GM10248 (cell line): ENCODE measurements at regions of chr10 and their contacts with region 1.

Region 1: DNA sequence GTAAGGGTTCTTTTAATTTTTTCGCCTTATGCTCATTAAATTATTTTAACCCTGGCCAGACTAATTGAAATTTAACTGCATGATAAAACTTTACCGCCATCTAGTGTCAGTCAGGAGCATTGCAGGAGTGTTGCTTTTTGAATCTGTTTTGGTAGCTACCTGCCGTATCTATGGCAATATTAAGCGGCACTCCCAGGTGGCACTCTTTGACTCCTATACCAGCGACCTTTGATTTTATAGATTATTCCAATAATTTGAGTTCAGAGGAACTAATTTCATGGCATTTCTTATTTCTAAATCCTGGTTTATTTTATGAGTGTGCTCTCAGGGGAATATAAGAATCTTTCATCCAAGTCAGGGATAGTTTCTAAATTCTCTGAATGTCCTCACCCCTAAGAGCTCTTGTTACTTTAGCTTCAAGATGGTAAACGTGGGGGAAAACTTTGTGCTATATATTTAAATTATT is 198.9 kb downstream of the REEP3 start:
- DNase-seq: peak; percentile 41
- CTCF ChIP-seq: peak; percentile 85

Region 2: DNA sequence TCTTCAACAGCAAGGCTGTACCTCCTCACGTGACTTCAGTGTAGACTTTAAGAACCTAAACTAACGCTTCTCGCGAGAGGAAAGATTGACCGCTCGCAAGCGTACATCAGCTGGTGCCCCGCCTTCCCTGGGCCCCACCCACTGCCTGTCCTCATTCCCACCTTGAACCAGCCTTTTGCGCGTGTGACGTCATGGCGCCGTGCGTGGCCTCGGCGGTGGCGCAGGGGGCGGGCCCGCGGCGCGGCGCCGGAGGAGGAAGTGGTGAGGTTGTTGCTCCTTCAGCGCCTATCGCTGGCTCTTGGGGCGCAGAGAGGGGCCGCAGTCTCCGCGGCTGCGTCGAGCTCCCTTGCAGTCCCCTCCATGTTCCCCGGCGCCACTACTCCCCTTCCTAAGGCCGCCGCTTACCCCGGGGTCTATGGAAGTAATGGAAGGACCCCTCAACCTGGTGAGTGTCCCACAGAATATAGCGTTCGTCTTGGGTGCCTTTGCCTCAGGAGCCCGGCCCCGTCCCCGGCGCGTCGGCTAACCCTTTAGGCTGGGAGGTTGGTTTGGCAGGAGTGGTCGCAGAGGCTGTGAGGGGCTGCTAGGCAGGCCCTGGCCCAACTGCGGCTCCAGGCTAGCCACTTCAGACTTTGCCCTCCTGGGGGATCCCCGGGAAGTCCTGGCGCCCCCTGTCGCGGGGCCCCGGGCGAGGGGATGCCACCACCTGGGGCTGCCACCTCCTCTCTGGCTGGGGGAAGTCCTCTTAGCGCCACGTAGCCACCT is 586.9 kb before region 1 on chr10 and contains the start of gene NRBF2:
- CTCF ChIA-PET with region 1: interaction called, 24 read pairs
- POLR2A ChIA-PET with region 1: no interaction called
- DNase-seq: peak; percentile 94
- CTCF ChIP-seq: no peak

Region 3: DNA sequence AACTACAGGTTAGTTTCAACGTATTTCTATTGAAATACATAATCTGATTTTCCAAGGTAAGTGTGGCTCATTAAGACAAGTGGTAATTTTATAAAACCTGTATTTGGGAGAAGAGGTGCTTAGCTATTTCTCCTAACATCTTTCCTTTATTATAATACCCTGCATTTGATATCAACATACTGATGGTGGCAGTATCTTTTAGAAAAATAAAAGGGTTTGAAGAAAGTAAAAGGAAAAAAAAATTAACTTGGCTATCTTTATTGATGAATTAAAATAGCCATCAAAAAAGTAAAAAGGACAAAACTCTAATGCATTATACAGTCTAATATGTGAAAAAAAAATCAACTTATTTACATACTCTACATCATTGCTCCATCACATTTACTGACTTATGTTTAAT is 519.0 kb before region 1 on chr10:
- CTCF ChIA-PET with region 1: interaction called, 11 read pairs
- POLR2A ChIA-PET with region 1: no interaction called
- DNase-seq: no peak
- CTCF ChIP-seq: no peak

Region 4: DNA sequence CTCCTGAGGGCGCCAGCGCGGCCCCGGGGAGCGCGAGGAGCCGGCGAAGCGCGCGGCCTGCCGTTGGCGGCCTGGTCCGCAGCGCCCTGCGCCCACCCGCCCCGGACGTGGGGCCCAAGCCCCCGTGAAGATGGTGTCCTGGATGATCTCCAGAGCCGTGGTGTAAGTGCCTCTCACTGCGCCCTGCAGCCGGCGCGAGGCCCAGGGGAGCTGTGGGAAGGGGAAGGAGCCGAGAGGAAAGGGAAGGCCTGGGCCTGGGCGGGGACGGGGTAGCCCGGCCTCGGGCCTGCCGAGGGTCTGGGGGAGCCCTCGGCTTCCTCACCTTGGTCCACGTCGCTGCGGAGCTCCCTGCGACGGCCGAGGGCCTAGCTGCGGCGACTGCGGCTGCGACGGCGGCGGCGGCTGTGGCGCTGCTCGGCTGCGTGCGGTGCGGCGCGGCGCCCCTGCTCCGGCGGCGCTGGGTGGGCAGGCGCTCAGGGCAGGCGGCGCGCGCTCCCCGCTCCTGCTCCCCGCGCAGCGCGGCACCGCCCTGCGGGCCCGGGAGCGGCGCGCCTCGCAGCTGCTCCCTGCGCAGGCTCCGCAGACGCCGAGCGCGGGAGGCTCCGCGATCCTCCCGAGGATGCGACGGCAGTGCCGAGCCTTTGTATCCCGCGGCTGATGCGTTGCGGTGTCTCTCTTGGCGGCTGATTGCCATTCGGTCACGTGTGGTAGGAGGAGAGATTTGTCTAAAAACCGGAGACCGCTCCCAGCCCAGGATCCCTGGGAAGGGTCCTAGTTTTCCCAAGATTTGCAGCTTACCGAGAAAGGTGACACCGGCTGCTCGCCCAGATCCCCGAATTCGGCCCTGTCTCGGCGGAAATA is 198.5 kb before region 1 on chr10:
- CTCF ChIA-PET with region 1: interaction called, 10 read pairs
- POLR2A ChIA-PET with region 1: interaction called, 5 read pairs
- DNase-seq: peak; percentile 81
- CTCF ChIP-seq: peak; percentile 5

Region 5: GRCh38 chr10:63670291-63670898 is 49.7 kb before region 1 on chr10:
- CTCF ChIA-PET with region 1: interaction called, 12 read pairs
- POLR2A ChIA-PET with region 1: no interaction called
- DNase-seq: peak; percentile 32
- CTCF ChIP-seq: no peak

Region 6: GRCh38 chr10:63707254-63707910 is 12.7 kb before region 1 on chr10:
- CTCF ChIA-PET with region 1: interaction called, 32 read pairs
- POLR2A ChIA-PET with region 1: no interaction called
- DNase-seq: peak; percentile 62
- CTCF ChIP-seq: no peak